ENCODE measurements at regions of chr4 and their contacts with region 1.

Region 1: GRCh38 chr4:53929955-53930798 is 134.2 kb downstream of the CHIC2 start:
- DNase-seq: peak; percentile 76
- ATAC-seq: peak; percentile 86
- H3K4me3 Mint-ChIP-seq: no peak overlapping the region
- H3K27ac Mint-ChIP-seq: no peak overlapping the region
- H3K4me1 Mint-ChIP-seq: no peaks in the 10 kb centered on the region
- H3K27me3 Mint-ChIP-seq: peaks cover 9% of the 10 kb centered on the region

Region 2: GRCh38 chr4:53920116-53920515 is 10.1 kb before region 1 on chr4:
- CTCF ChIA-PET with region 1: interaction called, 12 read pairs
- POLR2A ChIA-PET with region 1: no interaction called
- intact Hi-C with region 1: no loop called
- DNase-seq: no peak
- ATAC-seq: peak; percentile 47
- H3K4me3 Mint-ChIP-seq: no peak overlapping the region
- H3K27ac Mint-ChIP-seq: no peak overlapping the region
- H3K4me1 Mint-ChIP-seq: no peaks in the 10 kb centered on the region
- H3K27me3 Mint-ChIP-seq: peaks cover 5% of the 10 kb centered on the region

Region 3: DNA sequence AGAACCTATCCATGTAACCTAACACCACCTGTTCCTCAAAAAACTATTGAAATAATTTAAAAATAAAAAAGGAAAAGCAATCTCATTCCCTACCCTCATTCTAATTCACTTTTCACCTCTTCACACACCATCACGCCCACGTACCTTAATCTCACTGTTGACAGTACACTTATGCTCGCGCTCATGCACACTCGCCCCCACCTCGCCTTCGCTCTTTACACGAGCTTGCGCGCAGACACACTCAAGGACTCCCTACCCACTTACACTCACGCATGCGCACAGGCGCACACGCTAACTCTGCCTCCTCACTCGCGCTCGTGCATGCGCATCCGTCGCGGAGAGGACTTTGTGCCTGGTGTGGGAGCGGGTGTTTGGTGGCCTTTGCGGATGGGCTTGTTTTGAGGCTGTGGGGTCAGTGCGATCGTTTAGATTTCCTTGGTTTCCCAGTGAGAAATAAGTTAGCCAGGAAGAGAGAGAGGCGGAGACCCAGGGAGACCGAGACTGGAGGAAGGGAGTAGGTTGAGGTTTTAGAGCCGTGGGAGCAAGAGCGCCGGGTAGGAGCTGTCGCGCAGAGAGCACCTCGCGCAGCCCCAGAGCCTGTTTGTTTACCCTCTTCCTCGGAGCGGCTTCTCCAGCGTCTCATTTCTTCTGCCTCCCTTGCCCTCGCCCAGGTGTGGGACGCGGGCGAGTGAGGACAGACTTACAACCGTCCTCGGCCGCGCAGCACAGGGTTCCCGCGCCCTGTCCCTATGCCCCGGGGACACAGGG is 161.6 kb after region 1 on chr4:
- CTCF ChIA-PET with region 1: interaction called, 10 read pairs
- POLR2A ChIA-PET with region 1: no interaction called
- intact Hi-C with region 1: loop called (anchors 5 to 10 kb)
- DNase-seq: peak; percentile 84
- ATAC-seq: peak; percentile 87
- H3K4me3 Mint-ChIP-seq: peak overlapping the region; percentile 76
- H3K27ac Mint-ChIP-seq: peak overlapping the region; percentile 44
- H3K4me1 Mint-ChIP-seq: peaks cover 35% of the 10 kb centered on the region
- H3K27me3 Mint-ChIP-seq: peaks cover 59% of the 10 kb centered on the region

Region 4: DNA sequence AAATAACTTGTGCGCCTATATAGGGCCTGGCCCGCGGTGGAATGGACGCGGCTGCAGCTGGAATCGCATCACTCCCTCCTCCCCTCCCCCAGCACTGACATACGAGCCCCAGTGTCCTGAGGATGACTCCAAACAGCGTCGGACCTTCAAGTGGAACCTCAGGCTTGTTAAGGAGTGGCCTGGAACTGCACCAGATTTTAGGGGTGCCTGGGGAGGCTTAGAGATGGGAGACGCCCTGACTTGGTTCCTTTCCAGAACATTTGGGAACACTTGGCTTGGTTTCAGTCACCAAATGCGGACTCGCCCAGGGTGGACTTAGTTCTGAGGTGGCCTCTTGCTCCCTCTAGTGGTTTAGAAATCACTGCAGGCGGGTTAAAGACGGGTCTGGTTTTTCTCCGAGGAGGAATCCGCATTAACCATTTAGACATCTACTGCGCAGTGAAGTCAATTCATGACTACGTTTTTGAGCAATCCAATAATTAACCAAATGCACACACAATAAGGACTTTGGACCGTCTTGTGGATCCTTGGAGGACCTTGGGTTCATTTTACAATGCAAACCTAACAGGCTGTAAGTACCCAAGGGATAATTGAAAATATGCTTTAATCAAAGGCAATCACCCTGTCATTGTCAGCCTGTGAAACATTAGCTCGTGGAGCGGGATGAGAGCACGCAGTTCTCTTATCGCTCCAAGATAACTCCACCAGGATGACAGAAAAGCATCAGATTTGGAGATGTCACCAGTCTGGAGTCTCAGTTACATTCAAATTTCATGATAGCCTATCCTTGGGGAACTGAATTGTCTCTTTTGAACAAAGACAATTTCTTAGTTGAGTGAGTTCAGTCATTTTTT is 287.7 kb after region 1 on chr4:
- CTCF ChIA-PET with region 1: interaction called, 107 read pairs
- POLR2A ChIA-PET with region 1: no interaction called
- intact Hi-C with region 1: loop called (anchors 1 kb)
- DNase-seq: peak; percentile 68
- ATAC-seq: peak; percentile 89
- H3K4me3 Mint-ChIP-seq: peak overlapping the region; percentile 45
- H3K27ac Mint-ChIP-seq: no peak overlapping the region
- H3K4me1 Mint-ChIP-seq: peaks cover 3% of the 10 kb centered on the region
- H3K27me3 Mint-ChIP-seq: peaks cover 27% of the 10 kb centered on the region